PC-9 (cell line): ENCODE measurements at regions of chr4 and their contacts with region 1.

Region 1: DNA sequence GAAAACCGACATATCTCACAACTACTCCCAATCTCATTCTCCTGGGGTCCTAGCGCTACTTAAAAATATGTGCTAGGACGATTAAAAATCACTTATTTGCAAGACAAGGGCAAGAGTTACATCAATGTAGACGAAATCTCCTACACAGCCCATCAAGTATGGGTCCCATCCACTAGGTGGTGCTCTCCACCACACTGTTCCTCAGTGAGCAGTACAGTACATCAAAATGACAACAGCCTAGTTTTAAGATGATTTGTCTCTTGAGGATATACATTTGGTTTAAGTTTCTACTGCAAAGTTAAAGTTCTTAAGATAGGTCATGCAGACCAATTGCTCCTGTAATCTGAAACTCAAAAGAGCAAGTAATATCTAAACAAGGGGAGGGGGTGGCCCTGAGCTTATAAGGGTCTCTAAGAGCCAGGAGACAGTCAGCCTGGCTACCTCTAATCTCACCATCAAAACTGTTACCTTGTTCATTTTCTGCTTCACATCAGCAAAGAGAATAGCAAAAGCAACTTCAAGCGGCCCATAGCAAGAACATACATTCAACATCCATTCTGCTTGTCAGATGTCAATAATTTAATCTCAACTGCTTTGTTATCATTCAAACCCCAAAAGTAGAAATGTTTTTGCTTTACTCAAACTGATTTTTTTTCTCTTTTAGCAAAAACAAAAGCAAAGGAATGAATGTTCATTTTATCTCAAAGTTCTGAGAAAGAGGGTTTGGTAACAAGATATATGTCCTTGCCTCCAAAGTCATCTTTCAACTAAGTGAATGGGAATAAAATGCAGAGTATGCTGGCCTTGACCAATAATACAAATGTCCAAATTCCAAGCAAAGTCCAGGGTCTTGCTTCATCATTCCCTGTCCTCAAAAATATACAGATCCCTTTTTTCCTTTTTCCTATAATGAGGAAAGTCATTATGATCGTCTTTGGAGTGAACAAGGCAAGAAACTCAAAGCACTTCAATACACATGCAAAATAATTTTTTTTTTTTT is 53.1 kb downstream of the STX18 start:
- DNase-seq: peak; percentile 43 to 57
- H3K4me3 ChIP-seq: no peak overlapping the region
- H3K27ac ChIP-seq: no peak overlapping the region
- H3K4me1 ChIP-seq: no peaks in the 10 kb centered on the region
- H3K27me3 ChIP-seq: no peaks in the 10 kb centered on the region
- CTCF ChIP-seq: peak; percentile 83

Region 2: DNA sequence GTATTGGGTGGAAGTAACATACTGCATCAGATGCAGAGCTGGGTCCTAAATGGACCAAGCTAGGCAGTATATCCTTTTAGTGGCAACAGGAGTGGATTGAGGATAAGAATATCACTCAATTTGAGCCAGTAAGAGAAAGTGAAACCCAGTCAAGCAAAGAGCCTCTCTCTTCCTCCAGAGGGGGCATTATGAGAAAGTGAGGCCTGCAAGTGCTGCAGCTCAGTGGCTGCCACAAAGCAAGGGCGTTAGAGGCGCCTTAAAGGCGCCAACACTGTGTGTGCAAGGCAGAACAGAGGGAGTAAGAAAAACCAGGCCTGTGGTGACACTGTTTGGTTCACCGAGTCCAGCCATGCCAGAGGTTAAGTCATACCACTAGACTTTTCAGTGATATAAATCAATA is 35.7 kb after region 1 on chr4:
- CTCF ChIA-PET with region 1: interaction called, 18 read pairs
- POLR2A ChIA-PET with region 1: no interaction called
- intact Hi-C with region 1: no loop called
- DNase-seq: no peak
- H3K4me3 ChIP-seq: no peak overlapping the region
- H3K27ac ChIP-seq: no peak overlapping the region
- H3K4me1 ChIP-seq: no peaks in the 10 kb centered on the region
- H3K27me3 ChIP-seq: no peaks in the 10 kb centered on the region
- CTCF ChIP-seq: no peak

Region 3: GRCh38 chr4:4880492-4880891 is 391.8 kb after region 1 on chr4:
- CTCF ChIA-PET with region 1: no interaction called
- POLR2A ChIA-PET with region 1: no interaction called
- intact Hi-C with region 1: loop called (anchors 1 kb)
- DNase-seq: no peak
- H3K4me3 ChIP-seq: no peak overlapping the region
- H3K27ac ChIP-seq: no peak overlapping the region
- H3K4me1 ChIP-seq: no peaks in the 10 kb centered on the region
- H3K27me3 ChIP-seq: no peaks in the 10 kb centered on the region
- CTCF ChIP-seq: peak; percentile 55

Region 4: GRCh38 chr4:4995103-4995907 is 506.6 kb after region 1 on chr4:
- CTCF ChIA-PET with region 1: interaction called, 3 read pairs
- POLR2A ChIA-PET with region 1: no interaction called
- intact Hi-C with region 1: loop called (anchors 1 kb)
- DNase-seq: peak in 1 of 2 experiments; percentile 40
- H3K4me3 ChIP-seq: no peak overlapping the region
- H3K27ac ChIP-seq: no peak overlapping the region
- H3K4me1 ChIP-seq: peaks cover 8% of the 10 kb centered on the region
- H3K27me3 ChIP-seq: peaks cover 3% of the 10 kb centered on the region; the same call in 1 of the 2 replicates
- CTCF ChIP-seq: peak; percentile 81

Region 5: DNA sequence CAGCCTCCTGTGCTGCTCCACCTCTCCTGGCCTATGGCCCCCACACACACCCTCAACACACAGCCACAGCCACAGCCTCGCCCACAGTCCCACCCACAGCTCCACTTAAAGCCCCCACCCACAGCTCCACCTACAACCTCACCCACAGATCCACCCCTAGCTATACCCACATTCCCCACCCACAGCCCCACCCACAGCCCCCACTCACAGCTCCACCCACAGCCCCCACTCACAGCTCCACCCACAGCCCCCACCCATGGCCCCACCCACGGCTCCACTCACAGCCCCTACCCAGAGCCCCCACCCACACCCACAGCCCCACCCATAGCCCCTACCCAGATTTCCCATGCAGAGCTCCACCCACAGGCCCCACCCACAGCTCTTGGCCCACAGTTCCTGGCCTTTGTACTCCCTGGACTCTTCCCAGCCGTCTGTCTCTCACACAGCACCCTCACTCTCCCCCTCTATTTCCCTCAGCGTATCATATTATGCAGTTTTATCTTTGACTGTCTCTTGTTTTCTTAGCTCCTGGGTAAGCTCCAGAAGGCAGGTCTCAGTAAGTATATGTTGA is 897.1 kb after region 1 on chr4:
- CTCF ChIA-PET with region 1: no interaction called
- POLR2A ChIA-PET with region 1: no interaction called
- intact Hi-C with region 1: loop called (anchors 5 kb)
- DNase-seq: no peak
- H3K4me3 ChIP-seq: no peak overlapping the region
- H3K27ac ChIP-seq: no peak overlapping the region
- H3K4me1 ChIP-seq: no peaks in the 10 kb centered on the region
- H3K27me3 ChIP-seq: peaks cover 18% of the 10 kb centered on the region
- CTCF ChIP-seq: no peak

Region 6: GRCh38 chr4:5824635-5825034 is 1335.9 kb after region 1 on chr4:
- CTCF ChIA-PET with region 1: no interaction called
- POLR2A ChIA-PET with region 1: no interaction called
- intact Hi-C with region 1: loop called (anchors 10 kb)
- DNase-seq: peak in 1 of 2 experiments; percentile 19
- H3K4me3 ChIP-seq: no peak overlapping the region
- H3K27ac ChIP-seq: no peak overlapping the region
- H3K4me1 ChIP-seq: no peaks in the 10 kb centered on the region
- H3K27me3 ChIP-seq: no peaks in the 10 kb centered on the region
- CTCF ChIP-seq: peak; percentile 61; the same call in 1 of the 2 replicates

Region 7: GRCh38 chr4:5992828-5993321 is 1504.2 kb after region 1 on chr4:
- CTCF ChIA-PET with region 1: interaction called, 14 read pairs
- POLR2A ChIA-PET with region 1: no interaction called
- intact Hi-C with region 1: no loop called
- DNase-seq: no peak
- H3K4me3 ChIP-seq: no peak overlapping the region
- H3K27ac ChIP-seq: no peak overlapping the region
- H3K4me1 ChIP-seq: no peaks in the 10 kb centered on the region
- H3K27me3 ChIP-seq: peaks cover 48% of the 10 kb centered on the region
- CTCF ChIP-seq: no peak